WTC11 (cell line): ENCODE measurements at regions of chr9 and their contacts with region 1.

Region 1: DNA sequence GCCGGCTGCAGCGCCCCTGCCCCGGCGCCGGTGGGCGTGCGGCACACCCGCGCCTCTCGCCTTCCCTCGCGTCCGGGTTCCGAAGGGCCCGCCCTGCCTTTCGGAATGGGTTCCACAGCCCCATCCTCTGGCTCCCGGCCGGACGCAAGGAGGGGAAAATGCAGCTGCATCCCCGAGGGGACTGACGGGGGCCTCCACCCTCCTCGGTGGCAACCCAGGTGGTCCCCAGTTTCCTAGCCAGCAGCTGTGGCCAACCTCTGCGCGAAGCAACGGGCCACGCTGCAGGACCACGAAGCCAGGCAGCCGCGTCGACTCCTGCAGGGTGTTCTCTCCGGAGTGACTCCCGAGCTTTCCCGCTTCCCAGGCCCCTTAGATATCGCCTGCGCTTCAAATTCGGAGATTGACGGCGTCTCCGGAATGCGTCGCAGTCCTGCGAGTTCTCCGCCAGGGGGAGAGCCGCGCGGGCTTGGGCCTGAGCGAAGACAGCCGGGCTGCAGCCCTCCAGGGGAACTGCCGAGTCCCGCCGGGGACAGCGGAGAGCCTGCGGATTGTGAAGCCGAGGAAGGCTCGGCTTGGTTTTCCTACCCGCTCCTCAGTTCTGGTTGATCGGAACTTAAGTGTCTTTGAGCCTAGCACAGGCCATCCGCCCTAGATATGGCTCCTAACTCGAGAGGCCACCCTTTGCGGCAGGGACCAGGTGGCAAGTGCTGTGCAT is 582 bp upstream of the APBA1 start:
- DNase-seq: peak; percentile 93
- ATAC-seq: peak; percentile 90
- H3K4me3 Mint-ChIP-seq: peak overlapping the region; percentile 67
- H3K27ac Mint-ChIP-seq: no peak overlapping the region
- H3K4me1 Mint-ChIP-seq: peaks cover 11% of the 10 kb centered on the region; the same call in 1 of the 2 replicates
- H3K27me3 Mint-ChIP-seq: peaks cover 31% of the 10 kb centered on the region
- CTCF ChIP-seq: peak; percentile 79

Region 2: GRCh38 chr9:69421908-69422801 is 250.6 kb before region 1 on chr9:
- CTCF ChIA-PET with region 1: interaction called, 10 read pairs
- POLR2A ChIA-PET with region 1: no interaction called
- DNase-seq: peak; percentile 69
- ATAC-seq: peak; percentile 86
- H3K4me3 Mint-ChIP-seq: no peak overlapping the region
- H3K27ac Mint-ChIP-seq: no peak overlapping the region
- H3K4me1 Mint-ChIP-seq: peaks cover 11% of the 10 kb centered on the region
- H3K27me3 Mint-ChIP-seq: peaks cover 8% of the 10 kb centered on the region; the same call in 1 of the 2 replicates
- CTCF ChIP-seq: peak; percentile 83

Region 3: GRCh38 chr9:69645488-69645887 is 27.3 kb before region 1 on chr9:
- CTCF ChIA-PET with region 1: interaction called, 14 read pairs
- POLR2A ChIA-PET with region 1: no interaction called
- DNase-seq: peak; percentile 13
- ATAC-seq: peak; percentile 75
- H3K4me3 Mint-ChIP-seq: no peak overlapping the region
- H3K27ac Mint-ChIP-seq: no peak overlapping the region
- H3K4me1 Mint-ChIP-seq: no peaks in the 10 kb centered on the region; the same call in 1 of the 2 replicates
- H3K27me3 Mint-ChIP-seq: no peaks in the 10 kb centered on the region
- CTCF ChIP-seq: no peak

Region 4: DNA sequence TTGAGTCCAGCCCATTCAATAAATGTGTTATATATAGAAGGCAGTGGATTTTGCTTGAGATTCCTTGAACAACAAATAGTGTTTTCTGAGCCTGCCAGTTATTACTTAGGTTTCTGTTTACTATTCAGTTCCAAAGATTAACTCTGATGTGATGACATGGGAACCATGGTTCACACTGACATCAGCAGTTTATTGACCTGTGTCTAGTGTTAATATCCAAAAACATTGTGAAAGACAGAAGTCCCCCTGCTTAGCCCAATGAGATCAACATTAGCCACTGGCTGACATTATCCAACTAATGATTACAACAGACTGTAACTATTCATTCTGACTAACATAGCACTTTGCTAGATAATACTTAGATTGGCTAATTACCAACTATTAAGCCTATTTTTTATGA is 15.5 kb before region 1 on chr9:
- CTCF ChIA-PET with region 1: interaction called, 16 read pairs
- POLR2A ChIA-PET with region 1: no interaction called
- DNase-seq: no peak
- ATAC-seq: no peak
- H3K4me3 Mint-ChIP-seq: no peak overlapping the region
- H3K27ac Mint-ChIP-seq: no peak overlapping the region
- H3K4me1 Mint-ChIP-seq: peaks cover 14% of the 10 kb centered on the region
- H3K27me3 Mint-ChIP-seq: no peaks in the 10 kb centered on the region
- CTCF ChIP-seq: no peak

Region 5: GRCh38 chr9:69740872-69741505 is 68.2 kb after region 1 on chr9:
- CTCF ChIA-PET with region 1: no interaction called
- POLR2A ChIA-PET with region 1: no interaction called
- DNase-seq: no peak
- ATAC-seq: no peak
- H3K4me3 Mint-ChIP-seq: no peak overlapping the region
- H3K27ac Mint-ChIP-seq: peak overlapping the region; percentile 8; the same call in 1 of the 2 replicates
- H3K4me1 Mint-ChIP-seq: peaks cover 9% of the 10 kb centered on the region
- H3K27me3 Mint-ChIP-seq: no peaks in the 10 kb centered on the region
- CTCF ChIP-seq: no peak

Region 6: GRCh38 chr9:69919461-69920061 is 246.8 kb after region 1 on chr9:
- CTCF ChIA-PET with region 1: interaction called, 14 read pairs
- POLR2A ChIA-PET with region 1: no interaction called
- DNase-seq: no peak
- ATAC-seq: peak; percentile 73
- H3K4me3 Mint-ChIP-seq: no peak overlapping the region
- H3K27ac Mint-ChIP-seq: no peak overlapping the region
- H3K4me1 Mint-ChIP-seq: peaks cover 15% of the 10 kb centered on the region
- H3K27me3 Mint-ChIP-seq: no peaks in the 10 kb centered on the region
- CTCF ChIP-seq: peak; percentile 38

Region 7: GRCh38 chr9:69931340-69931739 is 258.6 kb after region 1 on chr9:
- CTCF ChIA-PET with region 1: interaction called, 30 read pairs
- POLR2A ChIA-PET with region 1: no interaction called
- DNase-seq: no peak
- ATAC-seq: peak; percentile 57
- H3K4me3 Mint-ChIP-seq: no peak overlapping the region
- H3K27ac Mint-ChIP-seq: no peak overlapping the region
- H3K4me1 Mint-ChIP-seq: 0 out of 2 replicates have a peak, but pooled peaks cover 4% of the 10 kb centered on the region
- H3K27me3 Mint-ChIP-seq: peaks cover 6% of the 10 kb centered on the region
- CTCF ChIP-seq: 0 out of 2 replicates have a peak, but pooled peaks have one; percentile 14